SK-N-SH (cell line): ENCODE measurements at regions of chr11 and their contacts with region 1.

Region 1: GRCh38 chr11:122215244-122215992 is 99.4 kb upstream of the BLID start:
- DNase-seq: peak; percentile 88
- H3K4me3 ChIP-seq: no peak overlapping the region
- H3K27ac ChIP-seq: peak overlapping the region; percentile 53 to 94
- H3K4me1 ChIP-seq: peaks cover 3 to 11% of the 10 kb centered on the region in 2 experiments
- H3K27me3 ChIP-seq: no peaks in the 10 kb centered on the region
- CTCF ChIP-seq: peak; percentile 95
- EP300 ChIP-seq: peak; percentile 62 to 95; a peak in 3 of 4 replicates
- RAD21 ChIP-seq: peak; percentile 88

Region 2: GRCh38 chr11:122101625-122102291 is 113.7 kb before region 1 on chr11:
- CTCF ChIA-PET with region 1: interaction called, 19 read pairs
- POLR2A ChIA-PET with region 1: interaction called, 7 read pairs
- DNase-seq: peak; percentile 58
- H3K4me3 ChIP-seq: peak overlapping the region; percentile 77 to 80
- H3K27ac ChIP-seq: peak overlapping the region; percentile 94 to 98
- H3K4me1 ChIP-seq: peaks cover 9 to 37% of the 10 kb centered on the region in 2 experiments
- H3K27me3 ChIP-seq: no peaks in the 10 kb centered on the region
- CTCF ChIP-seq: peak; percentile 68
- EP300 ChIP-seq: peak in 1 of 2 experiments; percentile 14; a peak in 1 of 4 replicates
- RAD21 ChIP-seq: peak; percentile 82

Region 3: DNA sequence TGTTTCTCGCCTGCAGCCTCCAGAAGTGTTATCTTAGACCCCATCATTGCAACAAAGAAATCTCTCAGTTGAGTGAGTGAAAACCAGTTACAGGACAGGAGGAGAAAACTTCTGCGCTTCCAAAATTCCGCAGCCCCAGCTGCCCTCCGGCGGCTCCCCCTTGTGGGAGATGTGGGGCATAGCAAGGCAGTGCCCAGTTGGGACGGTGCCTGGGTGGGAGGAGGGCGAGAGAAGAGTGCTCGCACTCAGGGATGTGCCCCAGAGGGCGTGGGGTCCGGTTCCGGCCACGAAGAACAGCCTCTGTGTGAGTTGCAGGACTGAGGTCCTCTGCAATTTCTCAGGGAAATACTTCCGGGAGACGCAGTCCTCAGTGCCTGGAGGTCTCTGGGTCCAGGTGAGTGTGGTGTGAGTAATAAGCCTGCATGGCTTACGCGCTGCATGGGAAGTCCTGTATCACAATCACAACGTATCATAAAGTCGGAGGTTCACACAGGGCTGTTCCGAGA is 12.4 kb before region 1 on chr11:
- CTCF ChIA-PET with region 1: interaction called, 28 read pairs
- POLR2A ChIA-PET with region 1: no interaction called
- DNase-seq: peak; percentile 79
- H3K4me3 ChIP-seq: peak overlapping the region; percentile 47 to 67; a peak in 3 of 4 replicates
- H3K27ac ChIP-seq: peak overlapping the region; percentile 85 to 99
- H3K4me1 ChIP-seq: peaks cover 13 to 22% of the 10 kb centered on the region in 2 experiments
- H3K27me3 ChIP-seq: no peaks in the 10 kb centered on the region
- CTCF ChIP-seq: peak; percentile 98
- EP300 ChIP-seq: peak in 1 of 2 experiments; percentile 37; a peak in 1 of 4 replicates
- RAD21 ChIP-seq: peak; percentile 90

Region 4: DNA sequence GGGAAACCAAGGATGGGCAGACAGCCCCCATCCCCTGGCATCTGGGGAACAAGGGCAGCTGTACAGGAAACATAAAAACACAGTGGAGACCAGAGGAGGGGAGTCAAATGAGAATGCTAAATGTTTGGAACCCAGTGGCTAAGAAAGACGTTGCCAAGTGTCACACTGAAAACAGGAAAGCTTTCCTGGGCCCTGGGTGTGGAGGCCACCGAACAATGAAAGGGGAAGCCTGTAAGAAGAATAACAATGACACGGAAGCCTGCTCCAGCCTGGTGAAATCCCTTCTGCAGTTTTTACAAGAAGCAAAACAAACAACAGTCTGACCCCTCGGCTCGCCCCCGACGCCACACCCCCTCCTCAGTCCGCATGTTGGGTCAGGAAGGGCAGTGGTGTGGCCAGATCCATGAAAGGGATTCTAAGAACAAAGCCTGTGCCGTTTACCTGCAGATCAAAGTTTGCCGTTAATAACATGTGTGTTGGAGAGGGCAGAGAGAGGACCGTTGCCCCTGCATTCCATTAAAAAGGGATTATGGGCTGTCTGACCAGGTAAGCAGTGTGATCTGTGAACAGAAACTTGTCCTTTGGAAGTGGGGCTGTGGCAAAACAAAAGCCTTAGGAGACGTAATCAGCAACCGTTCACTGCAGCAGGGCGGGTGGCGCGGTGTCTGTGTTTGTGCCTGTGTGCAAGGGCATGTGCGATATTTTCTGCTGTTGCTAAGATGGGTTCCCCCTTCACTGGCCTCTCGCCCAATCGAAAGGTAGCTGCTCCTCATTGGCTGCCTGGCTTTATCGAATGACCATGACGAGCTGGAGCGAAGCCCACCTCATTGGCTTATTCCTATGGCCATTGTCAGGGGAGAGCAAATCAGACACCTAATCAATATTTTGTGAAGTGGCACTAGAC is 14.3 kb after region 1 on chr11:
- CTCF ChIA-PET with region 1: interaction called, 35 read pairs
- POLR2A ChIA-PET with region 1: no interaction called
- DNase-seq: no peak
- H3K4me3 ChIP-seq: no peak overlapping the region
- H3K27ac ChIP-seq: no peak overlapping the region
- H3K4me1 ChIP-seq: no peaks in the 10 kb centered on the region; a peak in 1 of 4 replicates
- H3K27me3 ChIP-seq: no peaks in the 10 kb centered on the region
- CTCF ChIP-seq: no peak
- EP300 ChIP-seq: no peak
- RAD21 ChIP-seq: no peak

Region 5: DNA sequence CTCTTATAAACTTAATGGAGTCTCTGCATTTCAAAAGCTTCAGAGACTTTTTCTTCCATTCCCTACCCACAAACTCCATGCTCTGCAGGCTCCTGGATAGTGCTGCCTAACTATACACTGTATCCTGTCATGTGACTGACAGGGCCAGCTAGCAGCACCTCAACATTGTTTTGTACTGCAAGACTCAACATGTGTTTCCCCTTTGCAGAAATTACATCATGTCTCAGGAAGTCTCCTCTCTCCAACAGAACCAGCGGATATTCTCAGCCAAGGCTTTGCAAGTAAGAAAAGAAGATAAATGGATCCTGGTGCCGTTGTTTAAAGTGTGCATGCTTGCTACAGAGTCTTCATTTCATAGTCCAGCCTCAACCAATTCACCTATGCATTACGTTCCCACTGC is 276.1 kb after region 1 on chr11:
- CTCF ChIA-PET with region 1: interaction called, 10 read pairs
- POLR2A ChIA-PET with region 1: no interaction called
- DNase-seq: no peak
- H3K4me3 ChIP-seq: no peak overlapping the region
- H3K27ac ChIP-seq: no peak overlapping the region
- H3K4me1 ChIP-seq: peaks cover 0 to 3% of the 10 kb centered on the region in 2 experiments; a peak in 2 of 4 replicates
- H3K27me3 ChIP-seq: peaks cover 4% of the 10 kb centered on the region; the same call in 1 of the 2 replicates
- CTCF ChIP-seq: no peak
- EP300 ChIP-seq: no peak
- RAD21 ChIP-seq: no peak

Region 6: DNA sequence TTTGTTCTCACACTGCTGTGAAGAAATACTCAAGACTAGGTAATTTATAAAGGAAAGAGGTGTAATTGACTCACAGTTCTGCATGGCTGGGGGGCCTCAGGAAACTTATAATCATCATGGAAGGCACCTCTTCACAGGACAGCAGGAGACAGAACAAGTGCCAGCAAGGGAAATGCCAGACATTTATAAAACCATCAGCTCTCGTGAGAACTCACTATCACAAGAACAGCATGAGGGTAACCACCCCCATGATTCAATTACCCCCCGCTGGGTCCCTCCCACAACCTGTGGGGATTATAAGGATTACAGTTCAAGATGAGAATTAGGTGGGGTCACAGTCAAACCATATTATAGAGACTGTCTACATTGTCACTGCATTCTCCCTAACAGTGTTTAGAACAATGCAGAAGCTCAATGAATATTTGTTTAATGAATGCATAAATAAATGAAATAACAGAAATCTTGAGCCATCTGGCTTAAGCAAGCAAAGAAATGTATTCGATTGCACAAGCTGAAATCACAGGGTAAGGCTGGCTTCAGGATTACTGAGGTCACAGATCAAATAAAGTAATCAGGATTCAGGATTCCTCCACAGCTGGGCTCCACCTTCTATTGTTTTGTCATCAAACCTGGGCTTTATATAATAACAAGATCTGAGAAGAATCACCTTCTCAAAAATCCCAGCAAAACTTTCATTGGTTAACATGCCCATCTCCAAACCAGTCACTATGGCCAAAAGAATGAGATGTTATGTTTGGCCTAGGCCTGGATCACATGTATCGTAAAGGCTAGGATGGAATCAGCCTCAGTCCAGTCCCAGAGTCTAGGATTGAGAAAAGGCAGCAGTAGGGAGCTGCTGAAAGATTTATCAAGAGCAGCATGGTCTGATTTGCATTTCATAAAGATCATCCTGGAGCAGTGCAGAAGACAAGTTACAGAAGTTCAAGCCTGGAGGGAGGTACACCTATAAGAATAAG is 302.3 kb after region 1 on chr11:
- CTCF ChIA-PET with region 1: interaction called, 16 read pairs
- POLR2A ChIA-PET with region 1: no interaction called
- DNase-seq: no peak
- H3K4me3 ChIP-seq: no peak overlapping the region
- H3K27ac ChIP-seq: peak overlapping the region in 1 of 2 experiments; percentile 93; a peak in 2 of 4 replicates
- H3K4me1 ChIP-seq: peaks cover 5 to 18% of the 10 kb centered on the region in 2 experiments; a peak in 3 of 4 replicates
- H3K27me3 ChIP-seq: peaks cover 8% of the 10 kb centered on the region; the same call in 1 of the 2 replicates
- CTCF ChIP-seq: no peak
- EP300 ChIP-seq: no peak
- RAD21 ChIP-seq: no peak

Region 7: GRCh38 chr11:122668562-122669090 is 453.2 kb after region 1 on chr11:
- CTCF ChIA-PET with region 1: no interaction called
- POLR2A ChIA-PET with region 1: no interaction called
- DNase-seq: no peak
- H3K4me3 ChIP-seq: no peak overlapping the region
- H3K27ac ChIP-seq: no peak overlapping the region
- H3K4me1 ChIP-seq: peaks cover 0 to 3% of the 10 kb centered on the region in 2 experiments; a peak in 1 of 4 replicates
- H3K27me3 ChIP-seq: no peaks in the 10 kb centered on the region
- CTCF ChIP-seq: no peak
- EP300 ChIP-seq: no peak
- RAD21 ChIP-seq: no peak